Naive thymus-derived CD4-positive, alpha-beta T cell (primary cell): ENCODE measurements at regions of chr17 and their contacts with region 1.

Region 1: GRCh38 chr17:35849469-35850348 is 19.0 kb downstream of the HEATR9 start:
- DNase-seq: peak in 8 of 9 donors; percentile 12 to 57 (median 41)
- ATAC-seq: peak; percentile 66
- H3K4me3 ChIP-seq: no peak overlapping the region
- H3K4me3 Mint-ChIP-seq: no peak overlapping the region
- H3K27ac ChIP-seq: no peak overlapping the region
- H3K27ac Mint-ChIP-seq: peak overlapping the region in 5 of 9 donors; percentile 2 to 27 (median 17)
- H3K4me1 ChIP-seq: peaks cover 0 to 13% of the 10 kb centered on the region in 2 donors
- H3K4me1 Mint-ChIP-seq: peaks cover 0 to 19% (median 5%) of the 10 kb centered on the region in 7 donors
- H3K27me3 ChIP-seq: no peaks in the 10 kb centered on the region
- H3K27me3 Mint-ChIP-seq: no peaks in the 10 kb centered on the region

Region 2: GRCh38 chr17:35794988-35795824 is 54.5 kb before region 1 on chr17 and contains the start of gene MMP28:
- CTCF ChIA-PET with region 1: no interaction called
- POLR2A ChIA-PET with region 1: no interaction called
- intact Hi-C with region 1: no loop called
- DNase-seq: peak; percentile 20 to 68 (median 39)
- ATAC-seq: peak; percentile 81
- H3K4me3 ChIP-seq: peak within 1 kb of the TSS; percentile 33
- H3K4me3 Mint-ChIP-seq: peak within 1 kb of the TSS; percentile 79 to 90 (median 85)
- H3K27ac ChIP-seq: peak within 1 kb of the TSS; percentile 4
- H3K27ac Mint-ChIP-seq: peak within 1 kb of the TSS in 8 of 9 donors; percentile 6 to 84 (median 49)
- H3K4me1 ChIP-seq: peaks cover 4 to 21% of the 10 kb centered on the region in 2 donors
- H3K4me1 Mint-ChIP-seq: peaks cover 7 to 66% (median 45%) of the 10 kb centered on the region in 7 donors
- H3K27me3 ChIP-seq: no peaks in the 10 kb centered on the region
- H3K27me3 Mint-ChIP-seq: peaks cover 0 to 87% (median 22%) of the 10 kb centered on the region in 5 donors
- total RNA-seq, gene MMP28: 2.9 to 15.1 (median 14.0) TPM in 4 of 5 experiments, not detected in the other

Region 3: GRCh38 chr17:35889818-35890763 is 40.4 kb after region 1 on chr17:
- CTCF ChIA-PET with region 1: no interaction called
- POLR2A ChIA-PET with region 1: no interaction called
- intact Hi-C with region 1: loop called in 1 of 2 experiments (anchors 5 kb)
- DNase-seq: no peak
- ATAC-seq: peak; percentile 22
- H3K4me3 ChIP-seq: no peak overlapping the region
- H3K4me3 Mint-ChIP-seq: peak overlapping the region in 1 of 10 donors; percentile 75
- H3K27ac ChIP-seq: no peak overlapping the region
- H3K27ac Mint-ChIP-seq: peak overlapping the region in 3 of 9 donors; percentile 49 to 89 (median 58)
- H3K4me1 ChIP-seq: peaks cover 0 to 49% of the 10 kb centered on the region in 2 donors
- H3K4me1 Mint-ChIP-seq: peaks cover 0 to 52% (median 7%) of the 10 kb centered on the region in 7 donors
- H3K27me3 ChIP-seq: no peaks in the 10 kb centered on the region
- H3K27me3 Mint-ChIP-seq: no peaks in the 10 kb centered on the region

Region 4: DNA sequence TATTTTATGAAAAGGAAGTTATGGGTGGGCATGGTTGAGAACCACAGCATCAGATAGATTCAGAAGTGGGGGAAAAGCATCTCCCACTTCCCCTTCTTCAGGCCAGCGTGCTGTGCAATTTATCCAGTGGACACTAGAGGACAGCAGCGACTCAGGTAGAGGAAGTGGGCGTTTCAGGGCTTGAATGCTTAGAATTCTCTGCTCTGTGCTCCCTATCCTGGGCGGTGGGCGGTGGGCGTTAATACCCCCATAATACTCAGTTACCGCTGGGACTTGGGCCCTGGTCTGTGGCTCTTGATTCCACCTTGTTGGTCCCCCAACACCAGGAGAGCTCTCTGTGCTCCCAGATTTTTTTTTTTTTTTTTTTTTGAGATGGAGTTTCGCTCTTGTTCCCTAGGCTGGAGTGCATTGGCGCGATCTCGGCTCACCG is 97.5 kb after region 1 on chr17:
- CTCF ChIA-PET with region 1: no interaction called
- POLR2A ChIA-PET with region 1: no interaction called
- intact Hi-C with region 1: loop called in 1 of 2 experiments (anchors 2 kb)
- DNase-seq: peak in 7 of 9 donors; percentile 8 to 43 (median 18)
- ATAC-seq: peak; percentile 86
- H3K4me3 ChIP-seq: no peak overlapping the region
- H3K4me3 Mint-ChIP-seq: no peak overlapping the region
- H3K27ac ChIP-seq: no peak overlapping the region
- H3K27ac Mint-ChIP-seq: no peak overlapping the region
- H3K4me1 ChIP-seq: no peaks in the 10 kb centered on the region
- H3K4me1 Mint-ChIP-seq: peaks cover 0 to 2% (median 0%) of the 10 kb centered on the region in 7 donors
- H3K27me3 ChIP-seq: no peaks in the 10 kb centered on the region
- H3K27me3 Mint-ChIP-seq: peaks cover 0 to 13% (median 6%) of the 10 kb centered on the region in 5 donors

Region 5: GRCh38 chr17:36072431-36073121 is 222.9 kb after region 1 on chr17:
- CTCF ChIA-PET with region 1: no interaction called
- POLR2A ChIA-PET with region 1: no interaction called
- intact Hi-C with region 1: loop called in 1 of 2 experiments (anchors 1 kb)
- DNase-seq: peak in 5 of 9 donors; percentile 12 to 76 (median 21)
- ATAC-seq: peak; percentile 84
- H3K4me3 ChIP-seq: no peak overlapping the region
- H3K4me3 Mint-ChIP-seq: peak overlapping the region in 1 of 10 donors; percentile 9
- H3K27ac ChIP-seq: no peak overlapping the region
- H3K27ac Mint-ChIP-seq: no peak overlapping the region
- H3K4me1 ChIP-seq: peaks cover 0 to 9% of the 10 kb centered on the region in 2 donors
- H3K4me1 Mint-ChIP-seq: peaks cover 0 to 9% (median 3%) of the 10 kb centered on the region in 7 donors
- H3K27me3 ChIP-seq: no peaks in the 10 kb centered on the region
- H3K27me3 Mint-ChIP-seq: peaks cover 0 to 22% (median 4%) of the 10 kb centered on the region in 5 donors

Region 6: DNA sequence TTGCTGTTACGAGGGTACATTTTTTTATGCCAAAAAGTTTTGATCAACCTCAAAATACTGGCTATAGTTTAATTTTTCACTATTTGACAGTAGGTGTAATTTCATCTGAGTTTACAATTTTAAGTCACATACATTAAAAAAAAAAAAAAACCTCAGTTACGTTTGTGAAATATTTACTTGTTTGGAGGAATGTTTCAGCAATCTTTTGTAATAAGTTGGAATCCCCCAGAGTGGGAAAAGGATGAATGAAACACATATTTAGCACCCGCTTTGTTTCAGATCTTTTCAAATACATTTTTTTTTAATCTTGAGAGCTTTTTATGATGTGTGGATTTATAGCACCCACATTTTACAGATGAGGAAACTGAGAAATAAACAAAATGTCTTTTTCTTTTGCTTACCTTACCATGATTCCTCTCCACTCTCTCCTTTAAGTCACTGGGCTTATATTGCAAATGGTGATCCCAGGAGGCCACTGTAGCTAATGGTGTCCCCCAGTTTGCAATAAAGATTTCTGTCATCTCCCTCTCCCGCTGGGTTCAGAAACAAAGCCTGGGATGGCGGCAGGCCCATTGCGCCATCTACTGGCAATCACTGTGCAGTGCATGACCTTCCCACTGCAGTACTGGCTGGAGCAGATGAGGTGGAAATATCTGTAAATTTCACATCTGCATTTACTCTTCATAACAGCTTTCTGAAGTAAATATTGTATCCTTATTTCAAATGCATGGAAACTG is 299.0 kb after region 1 on chr17:
- CTCF ChIA-PET with region 1: no interaction called
- POLR2A ChIA-PET with region 1: no interaction called
- intact Hi-C with region 1: loop called in 1 of 2 experiments (anchors 1 kb)
- DNase-seq: peak; percentile 19 to 65 (median 41)
- ATAC-seq: peak; percentile 93
- H3K4me3 ChIP-seq: no peak overlapping the region
- H3K4me3 Mint-ChIP-seq: peak overlapping the region in 2 of 10 donors; percentile 25 to 69
- H3K27ac ChIP-seq: no peak overlapping the region
- H3K27ac Mint-ChIP-seq: no peak overlapping the region
- H3K4me1 ChIP-seq: no peaks in the 10 kb centered on the region
- H3K4me1 Mint-ChIP-seq: peaks cover 0 to 10% (median 6%) of the 10 kb centered on the region in 7 donors
- H3K27me3 ChIP-seq: no peaks in the 10 kb centered on the region
- H3K27me3 Mint-ChIP-seq: peaks cover 11 to 51% (median 24%) of the 10 kb centered on the region in 5 donors